Testis (tissue), 5 donors: ENCODE measurements at regions of chr1 and their contacts with region 1.

Region 1: DNA sequence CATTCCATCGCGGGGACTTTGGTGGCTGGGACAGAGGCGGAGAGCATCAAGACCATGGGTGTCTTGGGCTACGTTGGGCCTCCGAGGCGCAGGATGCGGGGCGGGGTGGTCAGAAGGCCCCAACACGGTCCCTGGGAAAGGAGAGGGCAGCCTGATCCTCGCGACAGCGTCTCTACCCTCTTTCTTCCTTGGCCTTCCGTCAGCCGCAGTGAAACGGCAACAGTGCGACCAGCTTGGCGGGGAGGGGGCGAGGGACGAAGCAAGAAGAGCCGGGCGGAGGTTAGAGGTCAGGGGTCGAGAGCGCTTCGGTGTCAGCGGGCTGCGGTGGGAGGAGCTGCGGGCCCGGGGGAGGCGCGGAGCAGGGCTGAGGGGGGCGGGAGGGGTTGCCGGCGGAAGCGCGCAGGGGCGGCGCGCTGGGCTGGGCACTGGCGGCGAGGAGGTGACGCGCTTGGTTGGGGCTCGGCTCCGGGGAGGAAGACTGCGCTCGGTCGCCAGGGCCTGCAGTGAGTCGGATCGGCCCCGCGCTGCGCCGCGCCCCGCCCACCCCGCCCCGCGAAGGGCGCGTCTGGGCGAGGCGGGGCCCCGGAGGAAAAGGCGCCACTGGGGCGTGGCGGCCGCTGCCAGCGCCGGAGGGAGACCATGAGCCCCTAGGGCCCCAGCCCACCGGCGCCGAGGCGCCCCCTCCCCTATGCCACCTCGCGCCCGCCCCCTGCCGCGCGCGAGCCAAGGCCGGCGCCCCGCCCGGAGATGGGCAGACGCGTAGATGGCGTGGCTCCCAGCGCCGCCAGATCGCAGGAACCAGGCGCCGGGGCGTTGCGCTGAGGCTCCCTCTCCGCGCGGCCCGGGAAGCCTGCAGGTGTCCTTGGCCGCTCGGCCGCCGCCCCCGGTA is at the start of gene KCNC4:
- DNase-seq: peak; percentile 88
- H3K4me3 ChIP-seq: peak within 1 kb of the TSS; percentile 57 to 71
- H3K27ac ChIP-seq: peak within 1 kb of the TSS; percentile 63 to 76
- H3K4me1 ChIP-seq: peaks cover 13% of the 10 kb centered on the region
- H3K27me3 ChIP-seq: no peaks in the 10 kb centered on the region
- CTCF ChIP-seq: no peak
- POLR2A ChIP-seq: no peak
- total RNA-seq, gene KCNC4: 21.7 to 24.8 TPM

Region 2: DNA sequence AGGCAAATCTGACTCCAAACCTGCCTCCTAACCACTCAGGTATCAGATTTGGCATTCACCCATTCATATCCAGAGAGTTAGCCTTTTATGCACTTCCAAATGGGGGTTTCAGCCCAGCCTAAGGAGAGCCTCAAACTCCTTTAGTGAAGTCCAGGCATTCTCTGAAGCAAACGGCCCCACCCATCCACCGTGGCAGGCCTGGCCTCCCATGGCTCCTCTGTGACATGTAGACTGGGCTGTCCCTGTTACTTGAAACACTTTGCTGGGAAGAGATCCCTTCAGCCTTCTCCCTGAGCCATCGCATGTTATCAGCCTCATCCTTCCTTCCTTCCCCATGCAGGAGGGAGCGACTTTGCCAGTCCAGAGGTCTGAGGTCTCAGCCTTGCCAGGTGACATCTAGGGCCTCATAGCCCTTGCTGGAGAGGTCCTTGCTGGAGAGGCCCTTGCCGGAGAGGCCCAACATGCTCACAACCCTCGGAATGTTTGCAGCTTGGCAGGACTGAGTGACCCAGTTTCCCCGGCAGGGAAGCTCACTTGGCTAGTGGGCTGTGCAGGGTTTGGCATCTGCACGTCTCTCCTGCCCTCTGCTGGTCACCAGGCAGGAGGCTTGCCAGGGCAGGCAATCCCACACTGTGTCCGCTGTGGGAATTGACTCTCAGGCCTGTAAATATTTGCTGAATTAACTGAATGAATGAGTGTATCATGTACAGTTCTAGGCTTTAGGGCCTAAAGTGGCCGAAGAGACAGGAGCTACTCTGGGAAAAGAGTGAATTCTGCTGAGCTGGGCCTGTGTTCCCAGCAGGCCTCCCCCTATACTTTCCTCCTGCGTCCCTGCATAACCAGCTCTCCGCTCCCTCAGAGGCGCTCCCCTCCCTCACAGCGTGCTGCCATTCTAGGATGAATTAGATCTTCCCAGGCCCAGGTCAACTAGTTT is 102.5 kb after region 1 on chr1:
- intact Hi-C with region 1: loop called (anchors 5 kb)
- DNase-seq: peak; percentile 86
- H3K4me3 ChIP-seq: no peak overlapping the region
- H3K27ac ChIP-seq: no peak overlapping the region
- H3K4me1 ChIP-seq: peaks cover 4% of the 10 kb centered on the region
- H3K27me3 ChIP-seq: no peaks in the 10 kb centered on the region
- CTCF ChIP-seq: peak; percentile 79 to 90 (median 90)
- POLR2A ChIP-seq: no peak

Region 3: GRCh38 chr1:110495926-110496600 is 286.1 kb after region 1 on chr1:
- intact Hi-C with region 1: loop called (anchors 10 kb)
- DNase-seq: peak; percentile 95
- H3K4me3 ChIP-seq: no peak overlapping the region
- H3K27ac ChIP-seq: no peak overlapping the region
- H3K4me1 ChIP-seq: peaks cover 22% of the 10 kb centered on the region
- H3K27me3 ChIP-seq: no peaks in the 10 kb centered on the region
- CTCF ChIP-seq: peak; percentile 79 to 93 (median 84)
- POLR2A ChIP-seq: no peak